ENCODE measurements at regions of chr17 and their contacts with region 1.

Region 1: GRCh38 chr17:36148559-36149295 is 27.7 kb downstream of the TBC1D3B start:
- DNase-seq: peak; percentile 24 to 79 (median 49)
- ATAC-seq: peak; percentile 71
- H3K4me3 ChIP-seq: no peak overlapping the region
- H3K4me3 Mint-ChIP-seq: no peak overlapping the region
- H3K27ac ChIP-seq: no peak overlapping the region
- H3K27ac Mint-ChIP-seq: no peak overlapping the region
- H3K4me1 ChIP-seq: peaks cover 4% of the 10 kb centered on the region
- H3K4me1 Mint-ChIP-seq: no peaks in the 10 kb centered on the region
- H3K27me3 ChIP-seq: peaks cover 13% of the 10 kb centered on the region in 2 experiments
- H3K27me3 Mint-ChIP-seq: peaks cover 33% of the 10 kb centered on the region
- CTCF ChIP-seq: peak; percentile 96

Region 2: DNA sequence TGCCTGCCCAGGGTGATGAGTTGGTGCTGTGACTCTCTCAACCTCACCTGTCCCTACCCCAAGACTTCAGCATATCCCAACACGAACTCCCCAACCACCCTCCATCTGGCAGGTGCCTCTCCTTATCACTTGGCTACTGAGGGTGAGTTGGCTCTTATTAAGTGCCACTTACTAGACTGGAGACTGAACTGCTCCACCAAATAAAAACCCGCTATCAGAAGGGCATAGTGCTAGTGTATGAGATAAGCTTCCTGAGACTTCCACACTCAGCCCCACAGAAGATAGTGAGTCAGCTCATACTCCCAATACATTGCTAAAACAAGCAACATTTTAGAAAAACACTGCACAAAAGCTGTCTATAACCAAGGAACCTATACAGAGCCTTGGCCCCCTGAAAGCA is 100.7 kb before region 1 on chr17:
- CTCF ChIA-PET with region 1: no interaction called
- POLR2A ChIA-PET with region 1: no interaction called
- intact Hi-C with region 1: no loop called
- DNase-seq: no peak
- ATAC-seq: no peak
- H3K4me3 ChIP-seq: no peak overlapping the region
- H3K4me3 Mint-ChIP-seq: no peak overlapping the region
- H3K27ac ChIP-seq: no peak overlapping the region
- H3K27ac Mint-ChIP-seq: no peak overlapping the region
- H3K4me1 ChIP-seq: no peaks in the 10 kb centered on the region
- H3K4me1 Mint-ChIP-seq: no peaks in the 10 kb centered on the region
- H3K27me3 ChIP-seq: peaks cover 3 to 16% of the 10 kb centered on the region in 2 experiments
- H3K27me3 Mint-ChIP-seq: peaks cover 52% of the 10 kb centered on the region
- CTCF ChIP-seq: no peak

Region 3: DNA sequence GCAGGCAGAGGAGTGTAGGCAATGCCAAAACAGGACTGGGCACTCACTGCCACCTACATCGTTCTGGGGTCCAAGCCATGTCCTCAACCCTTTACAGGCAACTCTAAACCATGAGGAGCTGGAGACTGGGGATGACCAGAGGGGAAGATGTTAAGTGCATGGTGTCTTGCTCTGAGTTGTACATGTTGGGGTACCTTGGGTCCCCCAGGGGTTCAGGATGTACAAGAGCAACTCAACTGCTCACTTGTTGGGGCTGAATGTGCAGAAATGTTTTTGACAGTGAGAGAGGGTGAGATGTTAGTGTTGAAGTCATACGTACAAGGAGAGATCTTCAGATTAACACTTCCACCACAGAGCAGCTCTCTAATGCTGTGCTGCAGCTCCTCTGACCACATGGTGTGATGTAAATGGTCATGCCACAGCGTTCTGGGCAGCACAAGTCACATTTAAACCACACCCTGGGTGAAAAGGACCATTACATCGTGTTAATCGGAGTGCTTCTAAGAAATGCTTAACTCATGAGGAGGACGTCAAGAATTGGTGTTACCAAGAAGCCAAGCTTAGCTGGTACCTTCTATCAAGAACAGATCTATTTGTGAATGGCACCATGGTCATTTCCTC is 82.3 kb before region 1 on chr17:
- CTCF ChIA-PET with region 1: no interaction called
- POLR2A ChIA-PET with region 1: no interaction called
- intact Hi-C with region 1: loop called in 1 of 2 experiments (anchors 10 kb)
- DNase-seq: peak in 3 of 14 experiments; percentile 21 to 80 (median 38)
- ATAC-seq: no peak
- H3K4me3 ChIP-seq: no peak overlapping the region
- H3K4me3 Mint-ChIP-seq: no peak overlapping the region
- H3K27ac ChIP-seq: no peak overlapping the region
- H3K27ac Mint-ChIP-seq: no peak overlapping the region
- H3K4me1 ChIP-seq: peaks cover 6% of the 10 kb centered on the region
- H3K4me1 Mint-ChIP-seq: no peaks in the 10 kb centered on the region
- H3K27me3 ChIP-seq: peaks cover 0 to 4% of the 10 kb centered on the region in 2 experiments
- H3K27me3 Mint-ChIP-seq: peaks cover under 1% of the 10 kb centered on the region
- CTCF ChIP-seq: no peak

Region 4: DNA sequence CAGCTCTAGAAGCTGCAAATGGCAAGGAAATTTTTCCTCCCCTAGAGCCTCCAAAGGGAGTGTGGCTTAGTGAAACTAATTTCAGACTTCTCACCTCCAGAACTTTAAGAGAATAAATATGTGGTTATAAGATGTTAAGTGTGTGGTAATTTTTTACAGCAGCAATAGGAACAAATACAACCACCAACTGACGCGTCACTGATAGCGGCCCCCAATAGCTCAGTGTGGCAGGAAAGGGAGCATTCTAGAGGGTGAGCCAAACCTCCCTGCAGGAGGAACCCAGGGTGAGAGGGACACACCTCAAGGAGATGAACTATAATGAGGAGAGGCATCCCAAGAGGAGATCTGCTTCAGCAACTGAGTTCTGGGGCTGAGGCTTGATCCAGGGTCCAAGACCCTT is 41.1 kb before region 1 on chr17:
- CTCF ChIA-PET with region 1: no interaction called
- POLR2A ChIA-PET with region 1: no interaction called
- intact Hi-C with region 1: no loop called
- DNase-seq: peak in 1 of 14 experiments; percentile 69
- ATAC-seq: no peak
- H3K4me3 ChIP-seq: no peak overlapping the region
- H3K4me3 Mint-ChIP-seq: no peak overlapping the region
- H3K27ac ChIP-seq: no peak overlapping the region
- H3K27ac Mint-ChIP-seq: no peak overlapping the region
- H3K4me1 ChIP-seq: peaks cover 20% of the 10 kb centered on the region
- H3K4me1 Mint-ChIP-seq: no peaks in the 10 kb centered on the region
- H3K27me3 ChIP-seq: peaks cover 5 to 9% of the 10 kb centered on the region in 2 experiments
- H3K27me3 Mint-ChIP-seq: peaks cover 37% of the 10 kb centered on the region
- CTCF ChIP-seq: no peak

Measured in CD4-positive, alpha-beta T cell (primary cell).